AG04450 (cell line): ENCODE measurements at regions of chr14 and their contacts with region 1.

Region 1: GRCh38 chr14:54347997-54348611 is 48.7 kb upstream of the CDKN3 start:
- DNase-seq: no peak
- H3K4me3 ChIP-seq: no peak overlapping the region
- H3K27ac ChIP-seq: no peak overlapping the region
- H3K27me3 ChIP-seq: peaks cover 7% of the 10 kb centered on the region
- CTCF ChIP-seq: peak; percentile 63

Region 2: GRCh38 chr14:53306267-53306721 is 1041.8 kb before region 1 on chr14:
- CTCF ChIA-PET with region 1: interaction called, 18 read pairs
- POLR2A ChIA-PET with region 1: no interaction called
- DNase-seq: peak; percentile 42
- H3K4me3 ChIP-seq: peak overlapping the region; percentile 55
- H3K27ac ChIP-seq: no peak overlapping the region
- H3K27me3 ChIP-seq: peaks cover 2% of the 10 kb centered on the region
- CTCF ChIP-seq: peak; percentile 79

Region 3: DNA sequence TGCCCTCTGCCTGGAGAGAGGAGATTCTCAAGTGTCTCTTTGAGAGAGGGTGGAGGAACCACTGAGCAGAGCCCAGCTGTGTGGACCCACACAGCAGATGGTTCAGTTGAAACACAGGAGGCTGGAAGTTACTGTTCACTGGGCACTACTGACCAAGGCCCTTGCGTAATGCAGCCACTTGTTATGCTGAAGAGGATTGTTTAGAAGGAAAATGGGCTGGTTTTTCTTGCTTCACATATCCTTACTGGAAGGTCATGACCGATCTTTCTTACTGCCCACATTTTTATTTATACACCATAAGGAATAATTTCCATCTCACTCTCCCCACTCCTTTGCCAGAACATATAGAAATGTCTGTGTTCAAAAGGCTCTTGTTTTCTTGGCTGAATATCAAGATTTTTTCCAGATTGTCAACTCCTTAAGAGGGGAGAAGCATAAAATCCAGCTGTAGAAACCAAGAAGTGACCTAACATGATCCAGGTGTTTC is 819.9 kb before region 1 on chr14:
- CTCF ChIA-PET with region 1: interaction called, 10 read pairs
- POLR2A ChIA-PET with region 1: no interaction called
- DNase-seq: peak; percentile 90
- H3K4me3 ChIP-seq: no peak overlapping the region
- H3K27ac ChIP-seq: peak overlapping the region; percentile 52
- H3K27me3 ChIP-seq: no peaks in the 10 kb centered on the region
- CTCF ChIP-seq: no peak

Region 4: GRCh38 chr14:54175298-54175942 is 172.7 kb before region 1 on chr14:
- CTCF ChIA-PET with region 1: interaction called, 14 read pairs
- POLR2A ChIA-PET with region 1: no interaction called
- DNase-seq: peak; percentile 43
- H3K4me3 ChIP-seq: no peak overlapping the region
- H3K27ac ChIP-seq: no peak overlapping the region
- H3K27me3 ChIP-seq: peaks cover 10% of the 10 kb centered on the region
- CTCF ChIP-seq: peak; percentile 85